ENCODE measurements at regions of chr15 and their contacts with region 1.

Region 1: DNA sequence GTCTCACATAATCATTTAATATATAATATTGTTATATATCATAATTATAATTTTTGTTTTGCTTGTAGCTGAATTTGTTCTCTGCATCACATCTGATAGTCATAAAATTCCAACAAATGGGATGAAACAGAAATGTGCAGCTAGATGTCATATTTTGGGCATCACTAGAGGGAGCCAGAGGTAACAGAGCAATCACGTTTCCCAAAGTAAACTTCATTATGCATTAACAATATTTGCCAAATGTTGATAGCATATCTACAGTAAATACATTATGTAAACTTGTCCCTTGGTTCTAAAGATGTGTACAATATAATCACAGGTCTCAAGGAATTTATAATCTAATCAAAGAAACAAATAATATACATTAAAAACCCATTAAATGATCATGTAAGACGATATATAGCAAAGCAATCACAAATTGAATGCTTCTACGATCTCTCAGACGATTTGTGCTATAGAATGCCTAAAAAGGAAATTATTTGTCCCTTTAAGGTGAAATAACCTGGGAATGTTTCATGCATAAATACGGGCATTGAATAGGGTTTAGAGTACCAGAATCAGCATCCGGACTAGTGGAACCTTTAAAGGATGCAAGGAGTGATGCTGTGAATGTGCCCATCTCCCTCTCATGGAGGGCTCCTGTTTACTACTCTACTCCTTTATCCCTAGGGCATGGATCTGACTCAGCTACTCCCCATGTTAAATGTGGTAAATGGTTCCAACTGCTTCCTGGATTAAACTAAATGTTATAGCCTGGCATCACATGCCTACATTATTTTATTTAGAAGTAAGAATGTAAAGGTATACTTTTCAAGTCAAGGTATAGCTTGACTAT is 234.1 kb upstream of the MCTP2 start:
- DNase-seq: no peak
- H3K4me3 Mint-ChIP-seq: no peak overlapping the region
- H3K27ac Mint-ChIP-seq: no peak overlapping the region
- H3K4me1 Mint-ChIP-seq: no peaks in the 10 kb centered on the region
- H3K27me3 Mint-ChIP-seq: peaks cover 20% of the 10 kb centered on the region

Region 2: DNA sequence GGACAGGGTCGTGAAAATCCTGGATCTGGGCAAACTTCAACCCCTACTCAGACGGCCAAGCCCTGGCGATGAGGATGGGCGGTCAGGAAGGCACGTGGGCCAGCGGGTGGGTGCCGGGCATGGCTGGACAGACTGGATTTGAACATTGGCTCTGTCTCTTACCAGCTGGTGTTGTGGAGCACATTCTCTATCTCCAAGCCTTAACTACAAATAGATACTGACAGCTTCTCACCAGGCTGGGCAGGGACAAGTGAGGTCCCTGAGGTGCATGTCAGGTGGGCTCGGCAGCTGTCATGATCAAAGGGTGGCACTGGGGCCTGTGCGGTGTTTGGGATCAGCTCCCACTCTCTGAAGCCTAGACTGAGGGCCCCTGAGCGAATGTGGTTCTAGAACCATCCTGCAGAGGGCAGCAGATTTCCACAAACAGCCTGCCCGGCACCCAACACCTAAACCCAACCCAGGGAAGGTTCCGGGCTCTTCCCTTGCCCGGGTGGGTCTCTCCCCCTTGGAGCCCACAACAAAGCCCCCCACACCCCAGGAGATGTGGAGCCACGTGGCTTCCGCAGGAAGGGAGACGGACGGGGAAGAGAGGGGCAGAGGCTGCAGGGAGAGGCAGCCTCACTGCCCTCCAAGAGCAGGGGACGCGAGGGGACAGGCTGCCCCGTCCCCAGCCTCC is 966.7 kb before region 1 on chr15:
- intact Hi-C with region 1: loop called (anchors 5 kb)
- DNase-seq: peak; percentile 44
- H3K4me3 Mint-ChIP-seq: no peak overlapping the region
- H3K27ac Mint-ChIP-seq: no peak overlapping the region
- H3K4me1 Mint-ChIP-seq: peaks cover 22% of the 10 kb centered on the region
- H3K27me3 Mint-ChIP-seq: no peaks in the 10 kb centered on the region

Region 3: GRCh38 chr15:93913310-93913709 is 84.0 kb before region 1 on chr15:
- intact Hi-C with region 1: no loop called
- DNase-seq: no peak
- H3K4me3 Mint-ChIP-seq: no peak overlapping the region
- H3K27ac Mint-ChIP-seq: no peak overlapping the region
- H3K4me1 Mint-ChIP-seq: no peaks in the 10 kb centered on the region
- H3K27me3 Mint-ChIP-seq: no peaks in the 10 kb centered on the region

Region 4: GRCh38 chr15:93929375-93930094 is 67.8 kb before region 1 on chr15:
- intact Hi-C with region 1: loop called (anchors 10 kb)
- DNase-seq: no peak
- H3K4me3 Mint-ChIP-seq: no peak overlapping the region
- H3K27ac Mint-ChIP-seq: no peak overlapping the region
- H3K4me1 Mint-ChIP-seq: peaks cover 16% of the 10 kb centered on the region
- H3K27me3 Mint-ChIP-seq: no peaks in the 10 kb centered on the region